Activated CD4-positive, alpha-beta memory T cell treated with anti-CD3 and anti-CD28 coated beads, Interleukin-2, amount 10 ng/mL, durations not matched to agents 7 days and 5 days (primary cell): ENCODE measurements at regions of chr22 and their contacts with region 1.

Region 1: GRCh38 chr22:35430897-35431322 is 31.0 kb downstream of the MCM5 start:
- DNase-seq: peak; percentile 63
- H3K4me3 Mint-ChIP-seq: no peak overlapping the region
- H3K27ac Mint-ChIP-seq: no peak overlapping the region
- H3K4me1 Mint-ChIP-seq: peaks cover 5% of the 10 kb centered on the region
- H3K27me3 Mint-ChIP-seq: no peaks in the 10 kb centered on the region

Region 2: GRCh38 chr22:35369996-35370395 is 60.9 kb before region 1 on chr22:
- CTCF ChIA-PET with region 1: no interaction called
- POLR2A ChIA-PET with region 1: no interaction called
- DNase-seq: no peak
- H3K4me3 Mint-ChIP-seq: no peak overlapping the region
- H3K27ac Mint-ChIP-seq: no peak overlapping the region
- H3K4me1 Mint-ChIP-seq: peaks cover 8% of the 10 kb centered on the region
- H3K27me3 Mint-ChIP-seq: peaks cover 18% of the 10 kb centered on the region

Region 3: DNA sequence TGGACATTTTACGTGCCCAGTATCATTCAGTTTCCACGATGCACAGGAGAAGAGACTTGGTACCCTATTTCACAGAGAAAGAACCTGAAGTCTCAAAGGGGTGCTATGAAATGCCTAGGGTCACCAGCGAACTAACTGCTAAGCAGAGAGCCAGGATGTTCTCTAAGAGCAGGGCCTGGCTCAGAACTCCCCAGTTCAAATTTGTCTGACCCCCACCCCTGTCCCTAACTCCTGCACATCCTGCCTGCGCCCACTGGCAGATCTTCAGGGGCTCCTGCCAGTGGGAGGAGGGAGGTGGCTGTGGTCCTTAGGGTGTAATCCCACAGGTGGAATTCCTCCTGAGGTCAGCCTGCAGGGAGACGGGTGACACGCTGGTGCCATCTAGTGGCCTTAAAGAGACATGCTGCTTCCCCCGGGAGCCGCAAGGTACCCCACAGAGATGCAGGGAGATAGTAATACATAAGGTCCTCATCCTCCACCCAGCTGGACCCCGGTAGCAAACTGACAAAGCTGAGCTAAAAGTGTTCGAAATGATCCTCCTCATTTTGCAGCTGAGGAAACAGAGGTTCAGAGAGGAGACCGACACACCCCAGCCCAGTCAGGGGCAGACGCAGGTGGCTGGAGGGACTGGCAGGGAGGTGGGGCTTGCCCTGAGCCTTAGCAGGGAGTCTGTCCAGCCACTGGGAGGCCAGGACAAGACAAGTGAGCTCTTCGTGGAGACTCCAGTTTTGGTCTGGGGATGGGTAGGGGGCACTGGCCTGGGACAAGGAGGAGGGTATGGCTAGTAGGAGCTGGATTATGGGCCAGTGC is 152.2 kb after region 1 on chr22:
- CTCF ChIA-PET with region 1: interaction called, 13 read pairs
- POLR2A ChIA-PET with region 1: no interaction called
- DNase-seq: peak; percentile 48
- H3K4me3 Mint-ChIP-seq: no peak overlapping the region
- H3K27ac Mint-ChIP-seq: no peak overlapping the region
- H3K4me1 Mint-ChIP-seq: no peaks in the 10 kb centered on the region
- H3K27me3 Mint-ChIP-seq: no peaks in the 10 kb centered on the region